ENCODE measurements at regions of chr6 and their contacts with region 1.

Region 1: DNA sequence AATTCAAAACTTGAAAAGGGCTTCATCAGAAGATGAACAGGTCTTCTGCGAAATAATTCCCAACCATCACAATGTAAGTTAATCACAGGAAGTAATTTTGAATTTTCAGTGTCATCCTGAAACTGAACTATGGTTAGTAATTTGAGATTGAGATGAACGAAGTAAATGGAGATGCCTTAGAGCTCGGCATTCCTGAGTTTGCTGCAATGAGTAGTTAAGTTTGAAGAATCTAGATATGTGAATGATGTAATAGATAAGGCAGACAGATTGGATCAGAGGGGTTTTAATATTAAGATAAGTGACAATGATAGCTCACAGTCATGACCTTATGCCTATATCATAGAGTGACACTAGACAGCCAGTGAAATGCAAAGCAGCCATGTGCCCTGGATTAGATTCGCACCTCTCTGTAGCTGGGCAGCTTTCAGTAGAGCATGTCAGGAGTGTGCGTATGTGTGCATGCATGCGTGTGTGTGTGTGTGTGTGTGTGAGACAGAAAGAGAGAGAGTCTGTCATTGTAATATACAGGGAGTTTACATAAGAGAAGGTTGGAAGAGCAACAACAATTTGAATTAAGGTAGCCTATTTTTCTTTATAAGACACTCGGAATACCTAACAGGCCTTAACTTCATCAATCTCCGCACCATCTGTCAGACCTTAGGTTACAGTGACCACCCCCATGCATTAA is 233.0 kb downstream of the GMPR start:
- DNase-seq: peak; percentile 36
- ATAC-seq: peak; percentile 45
- H3K4me3 Mint-ChIP-seq: no peak overlapping the region
- H3K27ac Mint-ChIP-seq: peak overlapping the region; percentile 60
- H3K4me1 Mint-ChIP-seq: peaks cover 79% of the 10 kb centered on the region
- H3K27me3 Mint-ChIP-seq: no peaks in the 10 kb centered on the region

Region 2: DNA sequence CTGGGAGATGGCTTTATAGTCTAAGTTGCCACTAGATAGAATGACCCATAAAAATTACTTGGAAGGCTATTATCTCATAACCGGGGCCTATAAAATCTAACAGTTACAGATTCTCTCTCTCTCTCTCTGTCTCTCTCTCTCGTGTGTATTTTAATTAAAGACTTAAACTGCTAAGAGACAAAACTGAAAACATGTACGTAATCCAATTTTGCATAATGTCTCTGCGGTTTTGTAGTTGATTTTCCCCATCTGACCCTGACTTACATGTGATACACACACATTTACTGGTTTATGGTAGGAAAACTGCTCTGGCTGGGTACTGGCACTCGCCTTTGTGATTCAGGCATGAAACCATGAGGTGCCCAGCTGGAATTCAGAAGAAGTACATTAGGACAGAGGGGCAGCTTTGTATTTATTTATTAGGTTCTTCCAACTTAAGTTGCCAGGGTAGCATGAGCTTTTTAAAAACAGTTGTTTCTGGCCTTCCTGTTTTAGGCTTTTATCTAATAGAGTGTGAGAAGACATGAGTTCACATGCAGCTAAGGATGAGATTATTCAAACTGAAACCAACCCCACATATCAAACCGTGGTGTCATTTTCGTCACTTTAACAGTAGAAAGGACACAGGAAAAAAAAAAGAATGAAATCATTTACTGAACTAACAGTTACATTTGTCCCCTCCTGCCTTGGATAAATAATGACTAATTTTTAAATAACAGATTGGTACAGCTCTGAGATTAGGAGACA is 50.5 kb before region 1 on chr6:
- CTCF ChIA-PET with region 1: interaction called, 5 read pairs
- POLR2A ChIA-PET with region 1: interaction called, 3 read pairs
- intact Hi-C with region 1: loop called (anchors 2 kb)
- DNase-seq: peak; percentile 66
- ATAC-seq: peak; percentile 82
- H3K4me3 Mint-ChIP-seq: peak overlapping the region; percentile 58
- H3K27ac Mint-ChIP-seq: peak overlapping the region; percentile 94
- H3K4me1 Mint-ChIP-seq: peaks cover 53% of the 10 kb centered on the region
- H3K27me3 Mint-ChIP-seq: no peaks in the 10 kb centered on the region

Region 3: GRCh38 chr6:16438718-16439591 is 32.4 kb before region 1 on chr6:
- CTCF ChIA-PET with region 1: interaction called, 3 read pairs
- POLR2A ChIA-PET with region 1: interaction called, 4 read pairs
- intact Hi-C with region 1: loop called (anchors 2 to 5 kb)
- DNase-seq: peak; percentile 33
- ATAC-seq: no peak
- H3K4me3 Mint-ChIP-seq: peak overlapping the region; percentile 74
- H3K27ac Mint-ChIP-seq: peak overlapping the region; percentile 67
- H3K4me1 Mint-ChIP-seq: peaks cover 67% of the 10 kb centered on the region
- H3K27me3 Mint-ChIP-seq: no peaks in the 10 kb centered on the region

Region 4: DNA sequence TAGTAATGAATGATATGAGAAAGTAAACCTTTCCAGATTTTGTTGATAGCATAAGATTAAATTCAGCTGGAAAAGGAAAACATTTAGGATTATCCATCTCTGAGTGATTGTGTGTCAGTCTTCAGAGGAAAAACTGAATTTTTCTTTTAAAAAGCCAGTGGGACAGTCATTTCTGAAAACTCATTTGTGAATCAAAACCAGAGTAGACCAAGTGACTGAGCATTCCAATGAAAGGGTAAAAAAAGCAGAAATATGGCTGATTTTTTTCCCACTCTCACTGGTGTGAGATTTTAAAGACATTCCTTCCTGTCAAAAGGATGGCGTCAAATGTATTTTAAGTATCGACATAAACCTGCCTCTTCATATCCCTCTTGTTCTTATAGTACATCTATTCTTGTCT is 19.0 kb before region 1 on chr6:
- CTCF ChIA-PET with region 1: interaction called, 4 read pairs
- POLR2A ChIA-PET with region 1: no interaction called
- intact Hi-C with region 1: loop called in 1 of 2 experiments (anchors 2 kb)
- DNase-seq: no peak
- ATAC-seq: peak; percentile 47
- H3K4me3 Mint-ChIP-seq: no peak overlapping the region
- H3K27ac Mint-ChIP-seq: no peak overlapping the region
- H3K4me1 Mint-ChIP-seq: peaks cover 11% of the 10 kb centered on the region
- H3K27me3 Mint-ChIP-seq: no peaks in the 10 kb centered on the region

Region 5: GRCh38 chr6:16872543-16873235 is 401.3 kb after region 1 on chr6:
- CTCF ChIA-PET with region 1: no interaction called
- POLR2A ChIA-PET with region 1: no interaction called
- intact Hi-C with region 1: no loop called
- DNase-seq: no peak
- ATAC-seq: no peak
- H3K4me3 Mint-ChIP-seq: no peak overlapping the region
- H3K27ac Mint-ChIP-seq: no peak overlapping the region
- H3K4me1 Mint-ChIP-seq: no peaks in the 10 kb centered on the region
- H3K27me3 Mint-ChIP-seq: peaks cover 18% of the 10 kb centered on the region

Measured in activated CD4-positive, alpha-beta T cell treated with anti-CD3 and anti-CD28 coated beads for 36 hours (primary cell).